Panc1 (cell line): ENCODE measurements at regions of chr6 and their contacts with region 1.

Region 1: DNA sequence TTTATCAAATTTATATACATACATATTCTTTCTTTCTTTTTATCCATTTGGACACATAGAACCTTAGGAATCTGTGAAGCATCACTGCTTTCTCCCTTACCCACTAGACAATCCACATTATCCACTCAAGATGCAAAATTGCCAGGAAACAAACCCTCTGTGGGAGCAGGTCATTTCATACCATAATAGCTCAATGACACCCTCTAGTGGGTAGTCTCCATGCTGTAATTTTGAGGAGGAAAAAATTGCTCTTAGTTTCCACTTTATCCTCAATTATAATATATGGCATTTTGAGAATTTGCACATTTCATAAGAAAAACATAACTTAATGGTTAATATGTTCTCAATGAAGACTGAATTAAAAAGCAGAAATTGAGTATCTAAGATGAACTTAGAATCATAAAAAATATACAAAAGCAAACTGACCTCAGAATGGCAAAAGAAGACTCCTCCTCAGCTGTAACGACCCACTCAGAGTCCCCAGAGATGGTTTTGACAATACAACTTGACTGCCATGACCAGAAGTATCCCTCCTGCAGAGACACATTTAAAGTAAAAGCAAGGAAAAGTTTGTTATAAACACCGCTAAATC is 164.1 kb downstream of the FRK start:
- DNase-seq: peak; percentile 56
- ATAC-seq: peak; percentile 76; the same call in 1 of the 2 replicates
- H3K4me3 ChIP-seq: no peak overlapping the region
- H3K27ac ChIP-seq: no peak overlapping the region
- H3K4me1 ChIP-seq: no peaks in the 10 kb centered on the region
- H3K27me3 ChIP-seq: no peaks in the 10 kb centered on the region; the same call in 1 of the 2 replicates
- CTCF ChIP-seq: peak; percentile 85; the same call in 1 of the 2 replicates

Region 2: GRCh38 chr6:114747987-114748630 is 1148.5 kb before region 1 on chr6:
- CTCF ChIA-PET with region 1: no interaction called
- POLR2A ChIA-PET with region 1: no interaction called
- in situ Hi-C with region 1: no loop called
- intact Hi-C with region 1: loop called (anchors 1 kb)
- DNase-seq: peak; percentile 8
- ATAC-seq: no peak
- H3K4me3 ChIP-seq: no peak overlapping the region
- H3K27ac ChIP-seq: no peak overlapping the region
- H3K4me1 ChIP-seq: no peaks in the 10 kb centered on the region
- H3K27me3 ChIP-seq: no peaks in the 10 kb centered on the region
- CTCF ChIP-seq: peak; percentile 79; the same call in 1 of the 2 replicates

Region 3: GRCh38 chr6:116078522-116078921 is 181.9 kb after region 1 on chr6:
- CTCF ChIA-PET with region 1: no interaction called
- POLR2A ChIA-PET with region 1: no interaction called
- in situ Hi-C with region 1: no loop called
- intact Hi-C with region 1: no loop called
- DNase-seq: no peak
- ATAC-seq: no peak
- H3K4me3 ChIP-seq: no peak overlapping the region
- H3K27ac ChIP-seq: no peak overlapping the region
- H3K4me1 ChIP-seq: peaks cover 8% of the 10 kb centered on the region; the same call in 1 of the 2 replicates
- H3K27me3 ChIP-seq: no peaks in the 10 kb centered on the region
- CTCF ChIP-seq: no peak